Posterior vena cava (tissue), 2 donors: ENCODE measurements at regions of chr12 and their contacts with region 1.

Region 1: GRCh38 chr12:80412369-80412953 is 31.6 kb upstream of the PTPRQ start:
- DNase-seq: no peak

Region 2: GRCh38 chr12:80539029-80539428 is 126.6 kb after region 1 on chr12:
- intact Hi-C with region 1: no loop called
- DNase-seq: no peak

Region 3: GRCh38 chr12:80632835-80633234 is 220.4 kb after region 1 on chr12:
- intact Hi-C with region 1: loop called in 1 of 2 experiments (anchors 5 kb)
- DNase-seq: no peak

Region 4: GRCh38 chr12:80763874-80764273 is 351.4 kb after region 1 on chr12:
- intact Hi-C with region 1: loop called in 1 of 2 experiments (anchors 10 kb)
- DNase-seq: no peak